Panc1 (cell line): ENCODE measurements at regions of chr16 and their contacts with region 1.

Region 1: DNA sequence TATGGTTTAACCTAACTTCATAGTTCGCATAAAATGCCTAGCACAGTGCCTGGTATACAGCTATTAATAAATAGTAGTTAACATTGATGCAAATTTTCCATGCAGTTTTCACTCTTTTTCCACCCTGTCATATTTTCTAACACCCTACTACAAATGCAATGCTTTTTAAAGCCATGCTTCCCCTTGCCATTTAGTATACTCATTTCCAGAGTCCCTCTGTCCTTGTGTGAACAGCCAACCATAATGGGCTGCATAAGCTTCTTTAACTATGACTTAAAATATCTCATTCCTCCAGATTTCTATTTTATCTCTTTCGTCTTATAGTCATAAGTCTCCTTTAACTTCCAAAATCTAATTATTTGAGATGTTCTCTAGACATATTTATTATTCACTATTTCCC is 284.1 kb downstream of the GRIN2A start:
- DNase-seq: no peak
- ATAC-seq: no peak
- H3K4me3 ChIP-seq: no peak overlapping the region
- H3K27ac ChIP-seq: no peak overlapping the region
- H3K4me1 ChIP-seq: no peaks in the 10 kb centered on the region
- H3K27me3 ChIP-seq: no peaks in the 10 kb centered on the region
- CTCF ChIP-seq: no peak

Region 2: GRCh38 chr16:9657641-9658040 is 240.5 kb before region 1 on chr16:
- CTCF ChIA-PET with region 1: interaction called, 10 read pairs
- POLR2A ChIA-PET with region 1: no interaction called
- in situ Hi-C with region 1: no loop called
- intact Hi-C with region 1: no loop called
- DNase-seq: no peak
- ATAC-seq: no peak
- H3K4me3 ChIP-seq: no peak overlapping the region
- H3K27ac ChIP-seq: no peak overlapping the region
- H3K4me1 ChIP-seq: no peaks in the 10 kb centered on the region
- H3K27me3 ChIP-seq: 0 out of 2 replicates have a peak, but pooled peaks cover 2% of the 10 kb centered on the region
- CTCF ChIP-seq: no peak

Region 3: GRCh38 chr16:9953908-9954570 is 55.9 kb after region 1 on chr16:
- CTCF ChIA-PET with region 1: no interaction called
- POLR2A ChIA-PET with region 1: no interaction called
- in situ Hi-C with region 1: no loop called
- intact Hi-C with region 1: no loop called
- DNase-seq: no peak
- ATAC-seq: no peak
- H3K4me3 ChIP-seq: no peak overlapping the region
- H3K27ac ChIP-seq: no peak overlapping the region
- H3K4me1 ChIP-seq: no peaks in the 10 kb centered on the region
- H3K27me3 ChIP-seq: no peaks in the 10 kb centered on the region
- CTCF ChIP-seq: no peak

Region 4: GRCh38 chr16:11639925-11640899 is 1742.1 kb after region 1 on chr16:
- CTCF ChIA-PET with region 1: interaction called, 17 read pairs
- POLR2A ChIA-PET with region 1: no interaction called
- in situ Hi-C with region 1: no loop called
- intact Hi-C with region 1: no loop called
- DNase-seq: peak; percentile 93
- ATAC-seq: peak; percentile 67
- H3K4me3 ChIP-seq: no peak overlapping the region
- H3K27ac ChIP-seq: no peak overlapping the region; the same call in 1 of the 2 replicates
- H3K4me1 ChIP-seq: peaks cover 11% of the 10 kb centered on the region
- H3K27me3 ChIP-seq: no peaks in the 10 kb centered on the region
- CTCF ChIP-seq: no peak